Activated CD8-positive, alpha-beta T cell treated with anti-CD3 and anti-CD28 coated beads, Interleukin-2, amount 10 ng/mL, durations not matched to agents 7 days and 5 days (primary cell): ENCODE measurements at regions of chr9 and their contacts with region 1.

Region 1: GRCh38 chr9:22079873-22080341 is 70.8 kb upstream of the CDKN2B start:
- DNase-seq: peak; percentile 82
- ATAC-seq: peak; percentile 94
- H3K4me3 Mint-ChIP-seq: peak overlapping the region; percentile 7
- H3K27ac Mint-ChIP-seq: peak overlapping the region; percentile 84
- H3K4me1 Mint-ChIP-seq: peaks cover 66% of the 10 kb centered on the region
- H3K27me3 Mint-ChIP-seq: peaks cover 7% of the 10 kb centered on the region

Region 2: DNA sequence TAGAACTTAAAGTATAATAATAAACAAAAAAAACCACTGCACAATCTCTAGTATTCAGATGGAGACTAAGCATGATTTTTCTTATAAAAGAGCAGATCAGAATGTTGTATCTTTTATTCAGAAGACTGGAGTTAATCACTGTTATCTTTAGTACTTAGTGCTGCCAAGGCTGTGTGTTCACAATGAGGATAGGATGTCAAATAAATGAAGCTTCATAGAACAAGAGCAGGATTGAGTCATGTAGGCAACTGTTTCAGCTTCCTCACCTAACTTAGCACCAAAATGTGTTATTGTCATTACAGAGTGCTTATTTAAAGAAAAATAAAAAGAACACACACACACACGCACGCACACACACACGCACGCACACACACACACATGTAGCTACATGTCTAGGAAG is 12.7 kb before region 1 on chr9:
- CTCF ChIA-PET with region 1: interaction called, 15 read pairs
- POLR2A ChIA-PET with region 1: interaction called, 3 read pairs
- DNase-seq: no peak
- ATAC-seq: no peak
- H3K4me3 Mint-ChIP-seq: no peak overlapping the region
- H3K27ac Mint-ChIP-seq: no peak overlapping the region
- H3K4me1 Mint-ChIP-seq: peaks cover 74% of the 10 kb centered on the region
- H3K27me3 Mint-ChIP-seq: no peaks in the 10 kb centered on the region

Region 3: DNA sequence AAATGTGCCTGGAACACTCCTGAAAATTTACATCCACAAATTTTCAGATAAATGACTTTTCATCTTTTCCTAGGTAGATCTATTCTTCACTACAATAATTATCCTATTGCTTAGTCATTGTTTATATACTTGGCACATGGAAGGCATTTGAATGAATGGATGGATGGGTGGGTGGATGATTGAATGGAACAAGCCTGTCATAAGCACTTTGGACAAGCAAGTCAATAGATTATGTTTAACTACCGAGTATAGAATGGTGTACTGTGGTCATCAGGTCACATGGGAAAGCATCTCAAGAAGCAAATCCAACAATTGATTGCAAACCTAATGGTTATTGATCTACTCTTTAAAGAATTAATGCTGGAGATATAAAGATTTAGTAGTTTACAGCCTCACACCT is 252.3 kb after region 1 on chr9:
- CTCF ChIA-PET with region 1: no interaction called
- POLR2A ChIA-PET with region 1: no interaction called
- DNase-seq: no peak
- ATAC-seq: no peak
- H3K4me3 Mint-ChIP-seq: no peak overlapping the region
- H3K27ac Mint-ChIP-seq: no peak overlapping the region
- H3K4me1 Mint-ChIP-seq: no peaks in the 10 kb centered on the region
- H3K27me3 Mint-ChIP-seq: no peaks in the 10 kb centered on the region

Region 4: DNA sequence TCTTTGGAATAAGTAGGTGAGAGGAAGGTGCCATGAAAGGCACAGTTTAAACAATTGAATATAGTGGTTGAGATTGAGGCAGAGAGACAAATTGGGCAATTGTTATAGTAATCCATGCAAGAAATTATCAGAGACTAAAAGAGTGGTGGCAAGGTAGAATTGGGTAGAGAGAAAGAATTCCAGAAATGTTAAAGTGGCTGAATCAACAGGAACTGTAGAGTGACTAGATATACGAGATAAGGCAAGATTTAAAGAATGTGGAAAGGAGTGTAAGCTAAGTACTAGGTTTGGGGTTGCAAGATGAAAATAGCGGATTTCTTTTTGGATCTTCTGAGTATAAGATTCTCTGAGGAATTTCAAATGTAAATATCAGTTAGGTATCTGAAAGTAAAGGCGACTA is 651.9 kb after region 1 on chr9:
- CTCF ChIA-PET with region 1: no interaction called
- POLR2A ChIA-PET with region 1: no interaction called
- DNase-seq: no peak
- ATAC-seq: no peak
- H3K4me3 Mint-ChIP-seq: no peak overlapping the region
- H3K27ac Mint-ChIP-seq: no peak overlapping the region
- H3K4me1 Mint-ChIP-seq: no peaks in the 10 kb centered on the region
- H3K27me3 Mint-ChIP-seq: no peaks in the 10 kb centered on the region